Lower leg skin (tissue), 4 donors: ENCODE measurements at regions of chr19 and their contacts with region 1.

Region 1: DNA sequence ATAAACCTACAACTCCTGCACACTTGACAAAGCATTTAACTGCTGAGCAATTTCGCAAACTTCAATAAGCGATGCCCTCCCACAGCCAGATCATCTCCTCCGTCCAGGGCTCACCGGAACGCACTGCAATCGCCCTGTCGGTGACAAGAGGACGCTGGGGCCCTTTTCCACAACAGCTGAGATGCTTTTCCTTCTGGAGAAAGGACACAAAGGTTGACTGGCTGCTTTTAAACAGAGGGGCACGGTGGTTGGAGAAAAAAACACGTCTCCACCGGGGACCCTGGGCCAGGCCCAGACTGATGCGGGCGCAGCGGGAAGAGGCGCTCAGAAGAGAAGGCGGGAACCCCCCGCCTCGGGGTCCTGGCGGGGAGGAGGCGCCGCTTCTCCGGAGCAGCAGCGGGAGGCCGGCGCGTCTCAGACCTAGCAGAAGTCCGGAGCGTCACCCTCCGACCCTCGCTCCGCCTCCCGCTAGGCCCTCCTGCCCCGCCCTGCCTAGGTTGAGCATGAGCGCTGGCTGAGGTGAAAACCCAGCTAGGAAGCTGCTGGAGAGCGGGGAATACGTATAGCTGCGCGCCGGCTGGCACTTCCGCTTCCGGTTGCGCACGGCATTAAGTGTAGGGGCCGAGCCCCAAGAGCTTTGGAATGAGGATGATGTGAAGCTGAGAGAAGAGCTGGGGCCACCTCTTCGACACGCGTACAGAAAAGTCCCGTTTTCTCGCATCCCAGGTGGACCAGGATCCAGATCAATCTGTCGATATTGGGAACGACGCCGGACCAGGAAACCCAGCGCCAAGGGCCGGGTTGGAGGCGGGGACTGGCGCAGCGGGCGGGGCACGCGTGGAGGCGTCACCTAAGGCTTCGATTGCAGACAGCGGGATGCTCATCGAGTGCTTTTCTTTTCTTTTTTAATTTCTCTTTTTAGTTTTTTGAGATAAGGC is at the start of gene ZNF846:
- DNase-seq: peak; percentile 91 to 98
- H3K4me3 ChIP-seq: peak within 1 kb of the TSS; percentile 52
- CTCF ChIP-seq: no peak
- POLR2A ChIP-seq: no peak
- total RNA-seq, gene ZNF846: 8.7 to 15.5 (median 10.4) TPM

Region 2: DNA sequence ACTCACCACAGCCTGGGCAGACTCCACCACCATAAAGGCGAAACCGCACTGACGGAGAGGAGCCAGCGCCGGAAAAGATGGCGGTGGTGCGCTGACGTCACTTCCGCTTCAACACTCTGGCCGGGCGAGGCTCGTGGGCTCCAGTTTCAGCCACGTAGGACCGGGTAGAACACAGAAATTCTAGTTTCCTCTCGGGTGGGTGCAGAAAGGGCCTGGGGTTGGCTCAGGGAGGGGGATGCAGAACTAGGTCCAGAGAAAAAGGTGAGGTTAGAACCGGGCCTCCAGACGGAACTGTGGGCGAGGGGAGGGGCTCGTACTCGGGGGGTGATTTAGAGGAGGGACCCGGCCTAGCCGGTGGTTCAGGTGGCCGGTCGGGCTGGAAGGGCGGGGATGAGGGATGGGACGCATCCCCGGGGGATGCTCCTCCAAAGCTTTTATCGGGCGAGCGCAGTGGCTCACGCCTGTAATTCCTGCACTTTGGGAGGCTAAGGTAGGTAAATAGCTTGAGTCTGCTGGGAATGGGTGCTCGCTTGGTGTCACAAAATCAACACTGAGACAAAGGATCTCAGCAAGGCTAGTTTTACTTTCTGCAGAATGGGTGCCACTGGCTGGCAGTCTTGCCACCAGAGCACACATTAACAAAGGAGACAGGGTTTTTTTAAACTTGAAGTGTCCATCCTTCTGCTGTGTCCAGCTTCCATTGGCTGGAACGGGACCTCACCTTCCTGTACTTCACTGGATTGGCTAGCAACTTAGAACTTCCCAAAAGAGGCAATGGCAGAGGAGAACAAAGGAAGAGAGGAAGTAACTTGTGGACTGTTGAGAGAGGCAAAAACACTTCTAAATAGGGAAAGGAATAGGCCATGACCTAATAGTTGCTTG is 147.0 kb before region 1 on chr19 and contains the start of gene ZNF561:
- intact Hi-C with region 1: no loop called
- DNase-seq: peak; percentile 78 to 97
- H3K4me3 ChIP-seq: peak within 1 kb of the TSS; percentile 83
- CTCF ChIP-seq: no peak
- POLR2A ChIP-seq: no peak
- total RNA-seq, gene ZNF561: 31.3 to 55.0 (median 40.7) TPM

Region 3: DNA sequence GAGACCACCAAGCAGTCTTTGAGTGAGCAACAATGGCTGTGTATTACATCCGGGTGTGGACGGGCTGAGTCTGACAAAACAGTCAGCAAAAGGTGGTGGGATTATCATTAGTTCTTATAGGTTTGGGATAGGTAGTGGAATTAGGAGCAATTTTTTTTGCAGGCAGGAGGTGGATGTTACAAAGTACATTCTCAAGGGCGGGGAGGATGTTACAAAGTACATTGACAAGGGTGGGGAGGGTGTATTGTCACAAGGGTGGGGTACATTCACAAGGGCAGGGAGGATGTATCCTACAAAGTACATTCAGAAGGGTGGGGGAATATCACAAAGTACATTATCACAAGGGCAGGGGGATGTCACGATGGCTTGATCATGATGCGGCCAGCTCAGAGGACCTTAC is 132.4 kb before region 1 on chr19:
- intact Hi-C with region 1: loop called (anchors 10 kb)
- DNase-seq: no peak
- H3K4me3 ChIP-seq: no peak overlapping the region
- CTCF ChIP-seq: no peak
- POLR2A ChIP-seq: no peak